IMR-90 (cell line): ENCODE measurements at regions of chr11 and their contacts with region 1.

Region 1: GRCh38 chr11:69918938-69919650 is 99.9 kb upstream of the FGF3 start:
- DNase-seq: peak; percentile 57
- ATAC-seq: peak; percentile 68
- H3K4me3 ChIP-seq: no peak overlapping the region
- H3K27ac ChIP-seq: no peak overlapping the region
- H3K4me1 ChIP-seq: peaks cover 7% of the 10 kb centered on the region
- H3K27me3 ChIP-seq: no peaks in the 10 kb centered on the region; the same call in 1 of the 2 replicates
- CTCF ChIP-seq: peak; percentile 92
- POLR2A ChIP-seq: 0 out of 2 replicates have a peak, but pooled peaks have one; percentile 26
- RAD21 ChIP-seq: peak; percentile 88

Region 2: DNA sequence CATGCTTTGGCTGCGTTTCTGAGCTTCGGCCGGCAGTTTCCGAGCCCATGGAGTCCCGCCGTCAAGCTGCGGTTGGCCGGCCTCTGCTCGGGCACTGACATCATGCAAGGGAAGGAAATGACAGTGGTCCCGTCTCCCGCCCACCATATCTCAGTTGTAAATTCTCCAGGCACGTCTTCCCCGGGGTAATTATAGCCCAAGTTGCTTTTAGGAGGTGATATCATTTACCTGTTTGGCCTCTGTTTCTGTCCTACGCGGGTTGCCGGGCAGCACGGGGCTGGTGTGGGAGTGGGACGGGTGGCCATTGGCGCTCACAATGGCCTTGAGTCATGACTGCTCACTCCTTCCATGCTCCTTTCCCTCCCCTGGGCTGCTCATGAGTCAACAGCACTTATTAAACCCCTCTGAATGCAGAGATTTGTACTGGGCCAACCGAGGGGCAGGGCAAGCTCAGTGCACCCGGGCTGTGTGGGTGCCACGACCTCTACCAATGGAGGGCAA is 154.8 kb after region 1 on chr11:
- CTCF ChIA-PET with region 1: no interaction called
- POLR2A ChIA-PET with region 1: no interaction called
- dilution Hi-C with region 1: no loop called
- in situ Hi-C with region 1: no loop called
- intact Hi-C with region 1: loop called (anchors 5 kb)
- DNase-seq: peak; percentile 73
- ATAC-seq: no peak
- H3K4me3 ChIP-seq: no peak overlapping the region
- H3K27ac ChIP-seq: no peak overlapping the region
- H3K4me1 ChIP-seq: peaks cover 9% of the 10 kb centered on the region
- H3K27me3 ChIP-seq: no peaks in the 10 kb centered on the region; the same call in 1 of the 2 replicates
- CTCF ChIP-seq: no peak
- POLR2A ChIP-seq: no peak
- RAD21 ChIP-seq: no peak

Region 3: DNA sequence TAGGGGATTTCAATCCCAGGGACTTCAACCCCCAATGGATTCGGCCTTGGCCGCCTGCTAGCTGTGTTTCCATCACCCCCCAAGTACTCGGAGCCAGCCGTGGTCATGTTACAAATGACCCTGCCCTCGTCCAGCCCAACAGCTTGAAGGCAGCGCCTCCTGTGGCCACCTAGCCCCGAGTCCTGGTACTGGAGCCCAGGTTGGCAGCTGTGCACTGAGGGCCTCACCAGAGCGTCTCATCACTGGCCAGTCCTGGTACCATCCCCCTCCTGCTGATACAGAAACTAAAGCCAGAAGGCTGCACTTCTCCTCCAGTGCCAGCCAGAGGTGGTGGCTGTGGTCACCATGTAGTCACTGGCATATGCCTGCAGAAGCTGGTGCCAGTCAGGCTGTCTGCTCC is 239.1 kb after region 1 on chr11:
- CTCF ChIA-PET with region 1: no interaction called
- POLR2A ChIA-PET with region 1: no interaction called
- dilution Hi-C with region 1: loop called (anchors 25 kb)
- in situ Hi-C with region 1: no loop called
- intact Hi-C with region 1: no loop called
- DNase-seq: peak; percentile 19
- ATAC-seq: peak; percentile 68; the same call in 1 of the 2 replicates
- H3K4me3 ChIP-seq: no peak overlapping the region
- H3K27ac ChIP-seq: no peak overlapping the region
- H3K4me1 ChIP-seq: peaks cover 2% of the 10 kb centered on the region; the same call in 1 of the 2 replicates
- H3K27me3 ChIP-seq: no peaks in the 10 kb centered on the region
- CTCF ChIP-seq: peak; percentile 45
- POLR2A ChIP-seq: no peak
- RAD21 ChIP-seq: peak; percentile 60